Cardiac septum (tissue), 1 donor: ENCODE measurements at regions of chr4 and their contacts with region 1.

Region 1: DNA sequence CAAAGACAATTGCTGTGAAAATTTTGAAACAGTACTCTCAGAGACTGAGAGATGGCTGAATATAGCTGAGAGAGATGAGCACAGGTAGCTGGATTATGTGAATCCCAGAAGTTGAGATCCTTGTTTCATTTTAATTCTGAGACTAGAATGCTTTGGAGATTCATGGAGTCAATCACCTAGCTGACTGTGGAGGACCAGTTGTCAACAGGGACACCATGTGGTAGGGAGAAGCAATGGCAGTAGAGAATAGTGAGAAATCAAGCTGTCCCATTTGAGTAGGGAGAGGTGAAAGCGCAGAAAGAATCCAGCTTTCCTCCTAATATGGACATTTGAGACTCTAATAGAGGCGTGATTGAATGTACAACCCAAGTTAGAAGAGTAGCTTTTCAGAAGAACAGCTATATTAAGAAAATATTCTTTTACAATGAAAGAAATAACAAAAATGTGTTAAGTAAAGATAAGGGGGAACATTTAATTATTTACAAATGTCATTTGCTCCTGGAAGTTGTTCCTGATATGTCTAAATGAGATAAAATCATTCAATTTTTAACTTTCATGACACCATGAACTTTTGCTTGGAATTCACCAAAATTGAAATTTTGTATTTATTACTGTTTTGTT is 30.3 kb upstream of the GLRB start:
- DNase-seq: no peak

Region 2: DNA sequence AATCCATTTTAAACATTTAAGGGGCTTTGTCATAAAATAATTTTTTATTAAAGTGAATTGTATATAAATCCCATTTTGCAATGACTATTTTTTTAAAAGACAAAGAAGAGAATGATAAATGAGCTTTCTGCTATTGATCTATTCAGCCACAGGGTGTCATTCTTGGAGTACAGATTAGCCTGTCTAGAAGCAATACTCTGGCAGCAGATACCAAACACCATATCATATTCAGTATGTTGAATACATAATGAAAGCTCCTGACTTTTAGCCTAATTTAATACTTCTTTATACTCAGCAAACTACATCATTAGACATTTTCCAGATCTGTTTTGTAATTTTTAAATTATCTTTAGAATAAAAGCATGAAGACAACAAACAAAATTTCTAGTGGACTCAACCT is 570.3 kb before region 1 on chr4:
- intact Hi-C with region 1: loop called (anchors 5 kb)
- DNase-seq: no peak

Region 3: DNA sequence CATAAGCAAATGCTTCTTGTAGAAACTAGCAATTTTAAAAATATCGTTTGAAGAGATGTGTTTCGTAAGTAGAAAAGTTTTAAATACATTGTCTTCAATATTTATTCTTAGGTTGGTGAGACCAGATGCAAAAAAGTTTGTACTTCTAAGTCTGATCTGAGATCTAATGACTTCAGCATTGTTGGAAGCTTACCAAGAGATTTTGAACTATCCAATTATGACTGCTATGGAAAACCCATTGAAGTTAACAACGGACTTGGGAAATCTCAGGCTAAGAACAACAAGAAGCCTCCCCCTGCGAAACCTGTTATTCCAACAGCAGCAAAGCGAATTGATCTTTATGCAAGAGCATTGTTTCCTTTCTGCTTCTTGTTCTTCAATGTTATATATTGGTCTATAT is 124.7 kb after region 1 on chr4:
- intact Hi-C with region 1: no loop called
- DNase-seq: no peak